Activated naive CD4-positive, alpha-beta T cell treated with anti-CD3 and anti-CD28 coated beads for 36 hours (primary cell): ENCODE measurements at regions of chr13 and their contacts with region 1.

Region 1: DNA sequence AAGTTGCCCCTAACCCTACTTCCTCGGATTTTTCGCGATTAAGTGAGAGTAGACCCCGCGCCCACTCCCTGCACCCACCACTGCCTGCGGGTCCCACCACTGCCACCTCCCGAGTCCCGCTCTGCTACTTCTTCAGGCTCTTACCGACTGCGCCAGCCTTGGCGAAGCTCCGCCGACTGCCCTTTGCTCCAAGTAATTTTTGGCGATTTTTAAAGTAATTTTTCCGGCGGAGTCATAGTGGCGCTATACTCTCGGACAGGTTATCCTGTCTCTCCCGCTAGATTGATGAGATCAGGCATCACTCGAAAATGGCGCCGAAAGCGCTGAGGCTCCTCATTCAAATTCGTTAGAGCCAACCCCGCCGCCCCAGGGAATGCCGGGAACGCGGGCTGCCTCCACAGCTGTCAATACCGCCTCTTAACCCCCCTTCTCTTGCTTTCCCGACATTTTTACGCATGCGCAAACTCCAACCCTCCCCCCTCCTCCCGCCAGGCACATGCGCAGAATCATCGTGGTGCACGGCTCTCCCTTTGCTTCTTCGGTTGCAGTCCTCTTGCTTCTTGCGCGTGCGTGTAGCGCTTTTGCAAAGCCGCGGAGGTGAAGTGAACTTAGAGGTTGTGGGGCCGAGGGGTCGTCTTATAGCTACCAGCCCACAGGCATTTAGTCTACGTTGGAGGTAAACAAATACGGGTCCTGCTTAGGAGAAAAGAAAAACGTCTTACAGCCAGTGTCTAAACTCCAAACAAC is 66.6 kb downstream of the KCNRG start:
- DNase-seq: peak; percentile 99
- H3K4me3 Mint-ChIP-seq: peak overlapping the region; percentile 100
- H3K27ac Mint-ChIP-seq: peak overlapping the region; percentile 100
- H3K4me1 Mint-ChIP-seq: peaks cover 27% of the 10 kb centered on the region
- H3K27me3 Mint-ChIP-seq: peaks cover 15% of the 10 kb centered on the region

Region 2: GRCh38 chr13:49936085-49936940 is 145.5 kb before region 1 on chr13 and contains the start of gene SPRYD7:
- CTCF ChIA-PET with region 1: interaction called, 4 read pairs
- intact Hi-C with region 1: loop called (anchors 1 kb)
- DNase-seq: peak; percentile 96
- H3K4me3 Mint-ChIP-seq: peak within 1 kb of the TSS; percentile 90
- H3K27ac Mint-ChIP-seq: peak within 1 kb of the TSS; percentile 70
- H3K4me1 Mint-ChIP-seq: peaks cover 7% of the 10 kb centered on the region
- H3K27me3 Mint-ChIP-seq: peaks cover 2% of the 10 kb centered on the region
- total RNA-seq, gene SPRYD7: 2.5 to 2.6 TPM

Region 3: DNA sequence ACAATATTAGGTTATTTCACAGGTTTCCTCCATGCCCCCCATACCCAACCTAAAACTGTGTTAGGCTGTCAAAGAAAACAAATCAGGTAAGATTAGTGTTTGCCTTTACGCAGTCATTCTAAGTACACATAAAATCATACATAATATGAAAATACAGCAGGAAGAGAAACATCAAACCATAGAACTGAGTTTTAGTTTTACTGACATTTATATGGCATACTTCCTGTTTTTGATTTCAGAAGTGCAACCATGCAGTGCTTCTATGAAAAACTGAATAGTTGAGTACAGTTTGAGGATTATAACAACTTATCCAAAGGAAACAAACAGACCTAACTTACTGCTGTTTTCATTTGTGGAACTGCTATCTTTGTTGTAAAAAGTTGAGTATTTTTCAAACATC is 24.7 kb after region 1 on chr13:
- CTCF ChIA-PET with region 1: interaction called, 6 read pairs
- intact Hi-C with region 1: loop called (anchors 2 kb)
- DNase-seq: no peak
- H3K4me3 Mint-ChIP-seq: no peak overlapping the region
- H3K27ac Mint-ChIP-seq: peak overlapping the region; percentile 69
- H3K4me1 Mint-ChIP-seq: peaks cover 36% of the 10 kb centered on the region
- H3K27me3 Mint-ChIP-seq: no peaks in the 10 kb centered on the region

Region 4: GRCh38 chr13:50236898-50237318 is 155.1 kb after region 1 on chr13:
- CTCF ChIA-PET with region 1: interaction called, 3 read pairs
- intact Hi-C with region 1: loop called (anchors 2 kb)
- DNase-seq: peak; percentile 62
- H3K4me3 Mint-ChIP-seq: no peak overlapping the region
- H3K27ac Mint-ChIP-seq: peak overlapping the region; percentile 61
- H3K4me1 Mint-ChIP-seq: peaks cover 48% of the 10 kb centered on the region
- H3K27me3 Mint-ChIP-seq: peaks cover 12% of the 10 kb centered on the region

Region 5: GRCh38 chr13:50387051-50387581 is 305.3 kb after region 1 on chr13:
- CTCF ChIA-PET with region 1: no interaction called
- intact Hi-C with region 1: loop called (anchors 1 kb)
- DNase-seq: peak; percentile 56
- H3K4me3 Mint-ChIP-seq: no peak overlapping the region
- H3K27ac Mint-ChIP-seq: no peak overlapping the region
- H3K4me1 Mint-ChIP-seq: peaks cover 2% of the 10 kb centered on the region
- H3K27me3 Mint-ChIP-seq: peaks cover 5% of the 10 kb centered on the region

Region 6: GRCh38 chr13:50893211-50893852 is 811.5 kb after region 1 on chr13:
- CTCF ChIA-PET with region 1: interaction called, 4 read pairs
- intact Hi-C with region 1: loop called (anchors 1 kb)
- DNase-seq: peak; percentile 41
- H3K4me3 Mint-ChIP-seq: peak overlapping the region; percentile 36
- H3K27ac Mint-ChIP-seq: peak overlapping the region; percentile 79
- H3K4me1 Mint-ChIP-seq: peaks cover 38% of the 10 kb centered on the region
- H3K27me3 Mint-ChIP-seq: no peaks in the 10 kb centered on the region